Pancreas (tissue), 10 donors: ENCODE measurements at regions of chr15 and their contacts with region 1.

Region 1: GRCh38 chr15:100572362-100572983 is 29.5 kb downstream of the LINS1 start:
- DNase-seq: no peak
- ATAC-seq: peak in 1 of 4 donors; percentile 59
- H3K4me3 ChIP-seq: no peak overlapping the region
- H3K27ac ChIP-seq: no peak overlapping the region
- H3K4me1 ChIP-seq: no peaks in the 10 kb centered on the region
- H3K27me3 ChIP-seq: no peaks in the 10 kb centered on the region
- CTCF ChIP-seq: peak in 3 of 4 donors; percentile 9 to 38 (median 32)

Region 2: DNA sequence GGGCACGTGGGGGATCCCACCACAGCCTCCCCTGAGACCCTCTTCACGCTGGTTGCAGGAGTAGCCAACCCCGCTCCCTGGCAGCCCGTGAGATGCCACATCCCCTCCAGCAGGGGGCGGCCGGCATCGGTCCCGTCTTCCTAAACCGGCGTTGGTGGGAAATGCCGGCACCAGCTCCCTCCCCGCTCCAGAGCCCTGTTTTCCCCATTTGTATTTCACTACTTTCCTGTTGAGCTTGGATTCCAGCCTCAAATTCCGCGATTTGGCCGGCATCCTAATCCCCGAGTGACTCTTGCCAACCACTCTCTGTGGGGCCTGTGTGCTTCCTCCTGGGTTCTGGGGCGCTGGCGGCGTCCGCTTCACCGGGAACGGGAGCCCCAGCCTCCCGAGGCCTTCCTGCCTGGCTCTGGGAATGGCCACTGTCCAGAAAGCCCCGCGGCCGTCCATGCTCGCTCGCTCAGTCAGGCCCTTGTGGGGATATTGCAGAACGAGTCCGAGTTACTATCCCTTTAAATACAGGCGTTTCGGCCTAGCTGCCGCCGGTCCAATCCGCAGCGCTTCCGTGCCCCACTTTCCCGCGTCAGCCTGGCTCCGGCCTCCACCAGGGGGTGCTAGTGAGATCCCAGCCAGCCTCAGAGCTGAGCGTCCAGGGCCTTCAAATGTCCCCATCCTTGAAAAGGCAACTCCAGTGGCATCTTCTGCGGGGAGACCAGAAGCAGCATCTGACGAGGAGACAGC is 222.6 kb before region 1 on chr15:
- intact Hi-C with region 1: loop called in 2 of 3 experiments (anchors 5 to 10 kb)
- DNase-seq: peak; percentile 89 to 97 (median 96)
- ATAC-seq: peak; percentile 95 to 99 (median 96)
- H3K4me3 ChIP-seq: peak overlapping the region; percentile 66 to 80 (median 70)
- H3K27ac ChIP-seq: peak overlapping the region; percentile 92 to 98 (median 96)
- H3K4me1 ChIP-seq: peaks cover 0 to 7% (median 0%) of the 10 kb centered on the region in 3 donors
- H3K27me3 ChIP-seq: no peaks in the 10 kb centered on the region
- CTCF ChIP-seq: peak; percentile 71 to 98 (median 84)